GM10248 (cell line): ENCODE measurements at regions of chr17 and their contacts with region 1.

Region 1: GRCh38 chr17:78360371-78361224 is 721 bp upstream of the SOCS3 start:
- DNase-seq: peak; percentile 91
- CTCF ChIP-seq: peak; percentile 90

Region 2: DNA sequence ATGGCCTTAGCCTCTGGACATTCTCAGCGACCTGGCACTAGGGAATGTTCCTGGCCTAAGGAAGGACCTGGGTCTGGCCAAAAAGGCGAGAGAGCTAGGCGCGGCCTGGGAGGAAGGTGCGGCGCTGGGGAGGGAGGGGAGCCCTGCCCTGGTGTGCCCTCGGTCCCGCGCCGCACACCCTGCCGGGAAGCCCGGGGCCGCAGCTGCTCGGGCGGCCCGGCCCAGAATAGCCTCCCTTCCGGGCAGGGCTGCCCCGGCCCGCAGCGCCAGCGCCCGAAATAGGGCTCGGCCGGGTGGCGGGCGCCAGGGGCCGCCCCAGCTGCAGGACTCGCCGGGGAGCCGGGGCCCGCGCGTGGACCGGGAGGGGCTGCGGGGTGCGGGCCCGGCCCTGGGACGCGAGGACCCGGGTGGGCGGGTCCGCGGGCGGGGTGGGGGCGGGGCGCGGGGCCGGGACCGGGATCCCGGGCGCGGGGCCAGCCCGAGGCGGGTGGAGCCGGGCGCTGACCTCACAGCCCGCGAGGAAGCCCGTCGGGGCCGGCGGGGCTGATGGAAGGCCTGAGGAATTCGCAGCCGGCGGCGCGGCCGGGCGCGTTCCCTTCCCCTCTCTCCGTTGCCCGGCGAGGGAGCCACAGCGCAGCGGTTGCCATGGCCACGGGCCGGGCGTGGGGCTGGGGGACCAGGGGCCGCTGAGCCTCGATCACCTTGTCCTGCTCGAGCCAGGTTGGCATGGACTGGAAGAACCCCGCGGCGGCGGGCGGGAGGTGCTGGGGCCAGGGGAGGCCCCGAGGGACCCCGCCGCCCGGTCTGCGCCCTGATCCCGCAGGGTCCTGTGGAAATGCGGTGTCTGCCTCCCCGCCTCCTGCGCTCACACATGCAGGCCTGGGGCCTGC is 18.8 kb before region 1 on chr17:
- CTCF ChIA-PET with region 1: interaction called, 64 read pairs
- POLR2A ChIA-PET with region 1: interaction called, 5 read pairs
- DNase-seq: peak; percentile 50
- CTCF ChIP-seq: no peak

Region 3: DNA sequence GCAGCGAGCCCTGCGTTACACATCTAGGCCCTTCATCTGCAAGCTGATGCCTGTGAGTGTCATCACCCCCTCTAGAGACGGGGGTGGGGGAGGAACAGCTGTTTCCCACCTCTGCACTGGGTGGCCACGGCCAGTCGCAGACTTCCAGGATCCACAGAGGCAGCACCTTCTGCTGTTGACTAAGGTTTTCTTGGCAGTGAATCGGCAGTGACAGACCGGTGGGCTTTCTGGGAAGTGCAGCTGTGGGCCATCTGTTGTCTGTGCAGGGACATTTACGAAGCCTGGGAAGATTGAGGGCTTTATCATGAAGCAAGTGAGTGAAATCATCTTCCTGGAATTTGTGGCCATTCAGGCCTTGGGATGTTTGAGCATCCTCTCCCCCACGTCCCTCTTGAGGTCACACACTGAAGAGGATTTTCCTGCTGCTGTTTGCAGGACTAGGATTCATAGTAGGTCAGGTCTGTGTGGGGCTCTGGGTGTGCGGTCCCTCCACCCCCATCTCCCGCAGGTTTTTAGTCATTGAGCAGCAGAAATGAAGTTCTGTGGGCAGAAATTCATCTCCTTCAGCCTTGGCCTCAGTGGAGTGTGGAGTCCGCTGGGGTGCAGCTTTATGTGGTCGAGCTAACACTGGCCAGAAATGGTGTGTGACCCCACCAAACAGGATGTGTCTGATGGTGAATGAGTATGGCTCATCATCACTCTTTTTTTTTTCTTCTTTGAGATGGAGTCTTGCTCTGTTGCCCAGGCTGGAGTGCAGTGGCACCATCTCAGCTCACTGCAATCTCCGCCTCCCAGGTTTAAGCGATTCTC is 29.8 kb after region 1 on chr17:
- CTCF ChIA-PET with region 1: interaction called, 10 read pairs
- POLR2A ChIA-PET with region 1: interaction called, 6 read pairs
- DNase-seq: no peak
- CTCF ChIP-seq: no peak

Region 4: GRCh38 chr17:78412403-78412802 is 51.8 kb after region 1 on chr17:
- CTCF ChIA-PET with region 1: interaction called, 14 read pairs
- POLR2A ChIA-PET with region 1: no interaction called
- DNase-seq: no peak
- CTCF ChIP-seq: peak; percentile 43

Region 5: DNA sequence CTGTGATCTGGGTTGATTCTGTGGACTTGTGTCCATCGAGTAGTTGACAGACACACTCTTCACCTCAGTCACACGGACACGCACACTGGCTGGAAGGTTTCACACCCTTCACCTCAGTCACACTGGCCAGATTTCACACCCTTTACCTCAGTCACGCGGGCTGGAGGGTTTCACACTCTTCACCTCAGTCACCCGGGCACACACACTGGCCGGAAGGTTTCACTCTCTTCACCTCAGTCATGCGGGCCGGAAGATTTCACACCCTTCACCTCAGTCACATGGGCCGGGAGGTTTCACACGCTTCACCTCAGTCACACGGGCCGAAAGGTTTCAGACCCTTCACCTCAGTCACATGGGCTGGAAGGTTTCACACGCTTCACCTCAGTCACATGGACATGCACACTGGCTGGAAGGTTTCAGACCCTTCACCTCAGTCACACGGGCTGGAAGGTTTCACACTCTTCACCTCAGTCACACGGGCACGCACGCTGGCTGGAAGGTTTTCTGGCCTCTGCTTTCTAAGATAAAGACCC is 114.1 kb after region 1 on chr17:
- CTCF ChIA-PET with region 1: no interaction called
- POLR2A ChIA-PET with region 1: no interaction called
- DNase-seq: peak; percentile 69
- CTCF ChIP-seq: no peak

Region 6: DNA sequence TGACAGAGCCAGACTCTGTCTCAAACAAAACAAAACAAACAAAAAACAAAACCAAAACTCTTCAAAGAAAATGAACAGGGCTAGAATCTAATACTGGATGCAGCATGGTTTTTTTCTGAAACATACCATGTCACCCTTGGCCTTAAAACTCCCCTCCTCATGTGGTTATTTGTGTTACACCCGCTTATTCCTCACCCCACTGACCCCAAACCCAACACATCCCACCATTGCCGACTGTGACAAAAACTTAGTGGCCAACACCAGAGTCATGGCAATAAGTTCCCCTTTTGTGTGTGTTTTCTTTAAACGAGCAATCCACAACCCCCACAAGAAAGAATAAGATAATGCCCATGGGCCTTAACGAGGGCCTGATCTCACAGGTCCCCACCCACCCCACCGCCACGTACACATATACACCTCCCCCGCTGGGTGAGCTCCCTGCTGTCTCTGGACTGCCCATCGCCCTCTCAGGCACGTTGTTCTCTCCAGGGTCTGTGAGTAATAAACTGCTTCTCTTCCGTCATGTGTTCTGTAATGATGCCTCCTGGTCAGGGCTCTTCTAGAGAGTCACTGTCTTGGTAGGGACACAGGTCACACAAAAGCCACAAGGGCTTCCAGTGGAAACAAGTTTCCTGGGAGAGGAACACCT is 697.3 kb after region 1 on chr17:
- CTCF ChIA-PET with region 1: no interaction called
- POLR2A ChIA-PET with region 1: no interaction called
- DNase-seq: peak; percentile 11
- CTCF ChIP-seq: no peak